Activated CD8-positive, alpha-beta memory T cell treated with anti-CD3 and anti-CD28 coated beads, Interleukin-2, amount 10 ng/mL, durations not matched to agents 7 days and 5 days (primary cell): ENCODE measurements at regions of chr16 and their contacts with region 1.

Region 1: DNA sequence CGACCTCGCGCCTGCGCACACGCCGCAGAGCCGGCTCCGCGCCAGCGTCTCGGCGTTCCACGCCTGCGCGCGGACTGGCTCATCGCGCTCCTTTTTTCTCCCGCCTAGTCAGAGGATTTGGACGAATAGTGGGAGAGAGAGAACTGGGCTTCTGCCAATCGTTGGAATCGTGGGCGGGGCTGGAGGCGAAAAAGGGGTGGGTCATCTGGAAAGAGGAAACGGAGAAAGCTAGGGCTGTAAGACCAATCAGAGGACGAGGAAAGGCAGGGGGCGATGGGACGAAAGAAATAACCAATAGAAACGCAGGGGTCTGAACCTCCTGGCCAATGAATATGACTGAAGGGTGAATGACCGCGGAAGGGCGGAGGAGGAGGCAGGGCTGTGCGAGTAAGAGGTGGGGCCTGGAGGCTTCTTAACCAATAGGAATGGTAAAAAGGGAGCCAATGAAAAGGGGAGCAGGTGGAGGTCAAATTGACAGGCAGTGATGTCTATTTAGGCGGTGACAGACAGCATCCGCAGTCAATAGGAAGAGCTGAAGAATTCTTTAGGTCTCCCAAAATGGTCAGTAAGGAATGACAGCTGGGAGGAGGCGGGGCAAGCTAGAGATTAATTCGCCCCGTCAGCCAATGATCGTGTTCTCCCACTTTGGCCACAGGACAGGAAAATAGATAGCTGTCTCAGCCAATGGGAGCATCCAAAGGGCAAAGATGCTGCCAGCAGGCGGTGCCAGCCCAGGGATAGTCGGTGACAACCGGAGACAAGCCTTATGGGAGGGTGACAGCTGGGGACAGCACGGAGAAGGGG is at the start of gene TBC1D10B:
- DNase-seq: peak; percentile 100
- ATAC-seq: peak; percentile 84
- H3K4me3 Mint-ChIP-seq: peak within 1 kb of the TSS; percentile 95
- H3K27ac Mint-ChIP-seq: peak within 1 kb of the TSS; percentile 94
- H3K4me1 Mint-ChIP-seq: peaks cover 41% of the 10 kb centered on the region
- H3K27me3 Mint-ChIP-seq: no peaks in the 10 kb centered on the region
- total RNA-seq, gene TBC1D10B: 84.1 to 87.3 TPM

Region 2: GRCh38 chr16:30382111-30382881 is 11.7 kb after region 1 on chr16 and contains the start of gene SEPTIN1:
- CTCF ChIA-PET with region 1: interaction called, 25 read pairs
- DNase-seq: peak; percentile 94
- ATAC-seq: peak; percentile 46
- H3K4me3 Mint-ChIP-seq: peak within 1 kb of the TSS; percentile 91
- H3K27ac Mint-ChIP-seq: peak within 1 kb of the TSS; percentile 98
- H3K4me1 Mint-ChIP-seq: peaks cover 47% of the 10 kb centered on the region
- H3K27me3 Mint-ChIP-seq: no peaks in the 10 kb centered on the region
- total RNA-seq, gene SEPTIN1: 259 to 278 TPM

Region 3: GRCh38 chr16:30395155-30395991 is 24.7 kb after region 1 on chr16 and contains the start of gene ZNF48:
- CTCF ChIA-PET with region 1: interaction called, 10 read pairs
- DNase-seq: peak; percentile 67
- ATAC-seq: peak; percentile 78
- H3K4me3 Mint-ChIP-seq: peak within 1 kb of the TSS; percentile 79
- H3K27ac Mint-ChIP-seq: peak within 1 kb of the TSS; percentile 70
- H3K4me1 Mint-ChIP-seq: peaks cover 44% of the 10 kb centered on the region
- H3K27me3 Mint-ChIP-seq: peaks cover 2% of the 10 kb centered on the region
- total RNA-seq, gene ZNF48: 13.7 to 15.6 TPM